Dorsolateral prefrontal cortex (tissue), 120 donors: ENCODE measurements at regions of chr9 and their contacts with region 1.

Region 1: DNA sequence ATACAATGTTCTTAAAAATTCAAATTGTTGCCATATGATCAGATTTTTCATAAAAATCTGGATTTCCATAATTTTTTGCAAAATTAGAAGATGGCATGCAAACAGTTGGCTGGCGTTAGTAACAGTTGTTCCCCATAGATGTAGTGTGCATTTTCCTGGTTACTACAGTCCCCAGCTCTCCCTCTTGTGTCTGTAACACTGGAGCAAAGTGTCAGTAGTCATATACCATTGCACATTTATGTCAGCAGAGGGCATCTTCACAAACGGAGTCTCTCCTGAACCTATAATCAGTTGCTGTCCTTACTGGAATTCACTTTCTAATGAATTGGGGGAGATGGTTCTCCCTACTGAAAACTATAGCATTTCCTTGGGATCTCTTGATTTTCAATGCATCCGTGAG is 44.7 kb upstream of the DMAC1 start:
- DNase-seq: no peak
- H3K4me3 ChIP-seq: no peak overlapping the region
- H3K27ac ChIP-seq: no peak overlapping the region
- H3K27me3 ChIP-seq: no peaks in the 10 kb centered on the region
- CTCF ChIP-seq: peak in 52 of 56 donors; percentile 24 to 75 (median 54)

Region 2: GRCh38 chr9:7405924-7406604 is 438.2 kb before region 1 on chr9:
- intact Hi-C with region 1: loop called in 1 of 2 experiments (anchors 10 kb)
- DNase-seq: no peak
- H3K4me3 ChIP-seq: no peak overlapping the region
- H3K27ac ChIP-seq: no peak overlapping the region
- H3K27me3 ChIP-seq: no peaks in the 10 kb centered on the region
- CTCF ChIP-seq: no peak

Region 3: DNA sequence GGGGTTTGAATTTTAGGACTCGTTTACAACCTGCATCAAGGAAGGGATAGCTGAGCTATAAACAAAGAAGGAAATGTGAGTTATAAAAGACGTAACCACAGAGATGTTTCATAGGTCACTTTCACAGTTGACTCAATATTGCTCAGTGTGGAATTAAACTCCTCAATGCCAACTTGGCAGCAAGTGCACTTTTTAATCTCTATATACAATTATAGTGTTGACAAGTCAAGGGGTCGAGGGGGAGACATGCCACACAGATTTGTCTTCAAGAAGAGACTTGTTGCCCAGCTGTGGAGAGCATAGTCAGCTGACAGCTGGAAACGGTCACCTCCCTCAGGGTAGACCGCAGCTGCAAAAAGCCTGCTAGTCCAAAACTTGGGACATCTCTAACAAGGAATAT is 118.8 kb after region 1 on chr9:
- intact Hi-C with region 1: no loop called
- DNase-seq: no peak
- H3K4me3 ChIP-seq: no peak overlapping the region
- H3K27ac ChIP-seq: no peak overlapping the region
- H3K27me3 ChIP-seq: peaks cover 0 to 5% (median 0%) of the 10 kb centered on the region in 45 donors
- CTCF ChIP-seq: no peak

Region 4: GRCh38 chr9:7976167-7976755 is 132.0 kb after region 1 on chr9:
- intact Hi-C with region 1: loop called (anchors 2 to 10 kb)
- DNase-seq: no peak
- H3K4me3 ChIP-seq: no peak overlapping the region
- H3K27ac ChIP-seq: no peak overlapping the region
- H3K27me3 ChIP-seq: no peaks in the 10 kb centered on the region
- CTCF ChIP-seq: no peak

Region 5: DNA sequence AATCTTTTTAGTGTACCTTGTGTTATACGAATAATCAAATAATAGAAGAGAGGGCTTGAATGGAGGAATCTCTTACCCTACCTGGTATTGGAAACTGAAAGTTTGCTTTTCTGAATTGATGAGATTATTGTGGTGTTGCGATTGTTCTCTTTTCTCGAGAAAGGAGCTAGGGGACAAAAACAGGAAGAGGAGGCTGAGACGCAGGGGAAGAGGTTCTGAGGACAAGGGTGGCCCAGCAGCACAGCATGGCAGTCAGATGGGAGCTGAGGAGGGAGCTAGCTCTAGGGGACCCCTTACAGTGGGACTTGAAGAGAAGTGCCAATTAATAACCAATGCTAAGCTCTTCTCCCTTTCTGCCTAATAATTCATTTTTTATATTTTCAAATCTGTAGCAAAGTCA is 138.7 kb after region 1 on chr9:
- intact Hi-C with region 1: loop called (anchors 2 to 10 kb)
- DNase-seq: no peak
- H3K4me3 ChIP-seq: peak overlapping the region in 16 of 59 donors; percentile 1 to 42 (median 24)
- H3K27ac ChIP-seq: peak overlapping the region; percentile 59 to 99 (median 93)
- H3K27me3 ChIP-seq: no peaks in the 10 kb centered on the region
- CTCF ChIP-seq: no peak

Region 6: DNA sequence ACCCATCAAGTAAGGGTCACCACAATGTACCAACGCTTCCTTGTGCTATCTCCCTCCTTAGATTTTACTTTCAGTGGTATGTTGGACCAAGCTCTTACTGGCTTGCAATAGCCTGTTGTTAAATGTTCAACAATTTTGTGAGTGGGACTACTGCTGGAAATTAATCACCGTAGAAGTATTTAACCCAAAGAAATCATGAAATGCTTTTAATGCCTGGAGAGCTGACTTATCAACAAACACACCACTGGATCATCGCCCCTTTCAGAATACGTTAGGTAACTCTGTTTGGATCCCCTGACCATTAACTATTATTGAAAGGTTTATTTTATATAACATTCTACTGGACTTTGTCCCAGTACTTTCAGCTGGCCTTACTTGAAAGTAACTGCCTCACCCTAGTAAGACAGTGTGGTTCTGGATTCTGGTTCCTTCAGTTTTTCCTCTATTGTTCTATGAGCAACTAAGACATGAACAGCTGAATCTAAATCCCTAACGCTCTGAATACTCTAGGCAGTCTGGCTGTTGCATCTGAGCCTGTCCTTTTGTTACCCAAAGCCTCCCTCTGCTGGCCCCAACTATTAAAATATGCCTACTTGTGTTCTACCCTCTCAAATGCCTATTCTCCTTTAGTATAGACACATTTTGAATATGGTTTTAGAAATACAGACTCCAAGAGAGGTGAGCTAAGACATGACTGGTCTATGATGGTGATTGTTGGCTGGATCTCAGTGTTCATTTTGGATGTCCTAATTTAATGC is 1158.8 kb after region 1 on chr9:
- intact Hi-C with region 1: loop called in 1 of 2 experiments (anchors 10 kb)
- DNase-seq: peak in 5 of 10 donors; percentile 5 to 69 (median 33)
- H3K4me3 ChIP-seq: no peak overlapping the region
- H3K27ac ChIP-seq: peak overlapping the region in 40 of 59 donors; percentile 1 to 77 (median 50)
- H3K27me3 ChIP-seq: no peaks in the 10 kb centered on the region
- CTCF ChIP-seq: peak in 53 of 56 donors; percentile 15 to 79 (median 52)